Activated CD8-positive, alpha-beta memory T cell treated with anti-CD3 and anti-CD28 coated beads, Interleukin-2, amount 10 ng/mL, durations not matched to agents 7 days and 5 days (primary cell): ENCODE measurements at regions of chr5 and their contacts with region 1.

Region 1: GRCh38 chr5:132456296-132457001 is 34.1 kb downstream of the IRF1 start:
- DNase-seq: peak; percentile 85
- ATAC-seq: peak; percentile 65
- H3K4me3 Mint-ChIP-seq: peak overlapping the region; percentile 54
- H3K27ac Mint-ChIP-seq: peak overlapping the region; percentile 99
- H3K4me1 Mint-ChIP-seq: peaks cover 90% of the 10 kb centered on the region
- H3K27me3 Mint-ChIP-seq: no peaks in the 10 kb centered on the region

Region 2: DNA sequence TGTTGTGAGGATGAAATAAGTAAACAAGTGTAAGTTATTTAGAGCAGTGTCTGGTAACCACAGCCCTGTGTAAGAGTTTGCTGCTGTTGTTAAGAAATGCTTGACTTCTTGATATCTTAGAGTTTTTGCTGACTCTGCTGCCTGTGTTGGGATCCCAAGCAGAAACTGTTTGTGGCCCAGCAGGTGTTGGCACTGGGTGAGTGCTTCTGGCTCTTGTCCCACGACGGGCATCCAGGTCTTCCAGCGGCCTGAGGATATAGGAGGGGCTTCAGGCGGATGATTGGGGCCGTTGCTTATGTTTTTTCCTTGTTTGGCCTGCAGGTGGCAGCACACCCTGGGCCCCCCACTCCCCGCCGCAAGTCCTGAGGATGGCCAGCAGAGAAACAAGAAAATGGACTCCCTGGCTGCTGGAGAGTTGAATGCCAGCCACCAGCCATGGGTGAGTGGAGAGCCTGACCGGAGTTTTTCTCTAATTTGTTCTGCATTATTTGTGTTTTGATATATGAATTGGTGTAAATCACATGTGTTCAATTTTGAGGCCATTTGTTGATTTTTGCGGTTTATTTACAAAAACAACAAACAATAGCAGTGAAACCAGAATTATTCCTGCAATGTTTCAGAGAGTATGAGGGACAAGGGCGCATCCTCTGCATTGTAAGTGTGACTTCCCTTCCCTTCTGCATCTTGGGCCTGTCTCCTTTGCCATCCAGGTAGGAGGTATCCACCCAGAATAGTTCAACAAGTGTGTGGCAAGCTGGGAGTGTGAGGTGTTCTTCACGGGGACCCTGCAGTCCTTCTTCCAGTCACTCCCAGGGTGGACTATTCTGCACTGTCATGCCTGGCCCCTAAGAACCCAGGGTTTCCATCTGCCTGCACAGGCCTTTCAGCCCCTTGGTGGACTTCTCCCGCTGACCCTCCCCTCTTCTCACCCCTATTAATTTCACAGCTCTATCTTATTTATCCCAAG is 36.7 kb before region 1 on chr5:
- CTCF ChIA-PET with region 1: interaction called, 131 read pairs
- DNase-seq: peak; percentile 79
- ATAC-seq: peak; percentile 75
- H3K4me3 Mint-ChIP-seq: peak overlapping the region; percentile 55
- H3K27ac Mint-ChIP-seq: peak overlapping the region; percentile 98
- H3K4me1 Mint-ChIP-seq: peaks cover 96% of the 10 kb centered on the region
- H3K27me3 Mint-ChIP-seq: no peaks in the 10 kb centered on the region

Region 3: GRCh38 chr5:132466433-132467286 is 10.2 kb after region 1 on chr5:
- CTCF ChIA-PET with region 1: interaction called, 56 read pairs
- DNase-seq: peak; percentile 93
- ATAC-seq: peak; percentile 77
- H3K4me3 Mint-ChIP-seq: peak overlapping the region; percentile 59
- H3K27ac Mint-ChIP-seq: peak overlapping the region; percentile 86
- H3K4me1 Mint-ChIP-seq: peaks cover 98% of the 10 kb centered on the region
- H3K27me3 Mint-ChIP-seq: no peaks in the 10 kb centered on the region

Region 4: DNA sequence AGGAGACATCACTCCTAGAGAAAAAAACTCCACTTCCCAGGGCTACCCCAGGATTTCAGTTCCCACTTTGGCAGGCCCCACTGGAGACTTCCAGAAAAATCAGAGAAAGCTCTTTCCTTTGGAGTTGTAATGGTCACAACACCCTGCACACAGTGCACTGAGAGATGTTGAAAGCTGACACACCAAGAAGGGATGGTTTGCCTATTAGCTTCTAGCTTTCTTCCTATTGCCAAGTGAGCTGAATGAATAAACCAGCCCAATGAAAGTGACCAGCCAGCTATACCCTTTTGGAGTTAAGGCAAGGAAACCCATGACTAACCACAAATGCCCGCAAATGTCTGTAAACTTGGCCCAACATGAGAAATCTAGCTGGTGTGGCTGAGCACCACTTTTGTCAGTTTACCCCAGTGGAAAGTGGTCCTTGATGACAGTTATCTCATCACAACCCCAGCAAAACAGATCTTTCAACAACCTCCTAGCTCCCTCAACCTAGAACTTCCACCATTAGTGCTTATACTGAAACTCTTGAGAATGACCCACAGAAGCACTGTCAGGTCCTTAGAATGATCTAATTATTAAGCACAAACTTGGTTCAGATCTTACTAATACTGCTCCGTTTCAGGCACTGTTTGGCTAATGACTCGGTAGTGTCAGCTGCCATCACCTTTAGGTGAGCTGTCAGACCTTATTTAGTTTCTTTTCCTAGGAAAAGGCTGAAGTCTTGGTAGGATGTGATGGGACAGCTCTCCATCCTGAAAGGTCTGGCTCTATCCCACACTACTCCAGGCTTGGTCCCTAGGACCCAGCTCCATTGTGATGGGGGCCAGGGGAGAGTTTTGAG is 22.9 kb after region 1 on chr5:
- CTCF ChIA-PET with region 1: interaction called, 51 read pairs
- DNase-seq: no peak
- ATAC-seq: no peak
- H3K4me3 Mint-ChIP-seq: no peak overlapping the region
- H3K27ac Mint-ChIP-seq: peak overlapping the region; percentile 72
- H3K4me1 Mint-ChIP-seq: peaks cover 80% of the 10 kb centered on the region
- H3K27me3 Mint-ChIP-seq: no peaks in the 10 kb centered on the region

Region 5: GRCh38 chr5:132495667-132496190 is 39.3 kb after region 1 on chr5:
- CTCF ChIA-PET with region 1: interaction called, 25 read pairs
- DNase-seq: peak; percentile 91
- ATAC-seq: peak; percentile 55
- H3K4me3 Mint-ChIP-seq: peak overlapping the region; percentile 87
- H3K27ac Mint-ChIP-seq: peak overlapping the region; percentile 92
- H3K4me1 Mint-ChIP-seq: peaks cover 74% of the 10 kb centered on the region
- H3K27me3 Mint-ChIP-seq: no peaks in the 10 kb centered on the region